ENCODE measurements at regions of chr1 and their contacts with region 1.

Region 1: DNA sequence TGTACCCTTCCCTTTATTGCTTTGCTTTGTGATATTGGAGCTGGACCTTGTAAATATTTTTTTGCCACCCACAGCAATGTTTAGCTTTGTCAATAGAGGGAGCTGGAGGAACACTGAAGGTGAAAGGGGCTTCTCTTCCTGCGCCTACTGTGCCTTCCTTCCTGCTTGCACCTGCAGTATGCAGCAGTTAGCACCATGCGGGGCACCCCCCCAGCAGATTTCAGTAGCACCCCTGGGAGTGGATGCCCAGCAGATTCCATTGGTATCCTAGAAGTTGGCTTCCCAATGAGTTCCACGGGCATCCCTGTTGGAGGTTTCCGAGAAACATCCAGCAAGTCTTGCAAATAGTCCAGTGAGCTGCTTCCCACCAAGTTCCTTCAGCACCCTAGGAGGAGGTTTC is 25.6 kb downstream of the S100A10 start:
- DNase-seq: peak; percentile 76
- ATAC-seq: peak; percentile 78
- H3K4me3 ChIP-seq: no peak overlapping the region
- H3K4me3 Mint-ChIP-seq: no peak overlapping the region
- H3K27ac ChIP-seq: no peak overlapping the region
- H3K27ac Mint-ChIP-seq: no peak overlapping the region
- H3K4me1 ChIP-seq: peaks cover 0 to 7% of the 10 kb centered on the region in 2 donors
- H3K4me1 Mint-ChIP-seq: peaks cover 7% of the 10 kb centered on the region
- H3K27me3 ChIP-seq: peaks cover 0 to 7% (median 4%) of the 10 kb centered on the region in 4 experiments
- H3K27me3 Mint-ChIP-seq: peaks cover 18% of the 10 kb centered on the region
- CTCF ChIP-seq: peak; percentile 79

Region 2: GRCh38 chr1:151472856-151473731 is 495.0 kb before region 1 on chr1:
- CTCF ChIA-PET with region 1: no interaction called
- POLR2A ChIA-PET with region 1: no interaction called
- intact Hi-C with region 1: no loop called
- DNase-seq: peak; percentile 70
- ATAC-seq: peak; percentile 45
- H3K4me3 ChIP-seq: peak overlapping the region in 4 of 5 experiments; percentile 51 to 68 (median 60)
- H3K4me3 Mint-ChIP-seq: peak overlapping the region; percentile 82
- H3K27ac ChIP-seq: peak overlapping the region; percentile 26 to 62
- H3K27ac Mint-ChIP-seq: peak overlapping the region; percentile 86
- H3K4me1 ChIP-seq: peaks cover 0 to 12% of the 10 kb centered on the region in 2 donors
- H3K4me1 Mint-ChIP-seq: peaks cover 7% of the 10 kb centered on the region
- H3K27me3 ChIP-seq: peaks cover 0 to 2% (median 0%) of the 10 kb centered on the region in 4 experiments
- H3K27me3 Mint-ChIP-seq: peaks cover 12% of the 10 kb centered on the region
- CTCF ChIP-seq: no peak

Region 3: GRCh38 chr1:151945725-151946364 is 22.2 kb before region 1 on chr1:
- CTCF ChIA-PET with region 1: interaction called, 13 read pairs
- POLR2A ChIA-PET with region 1: interaction called, 3 read pairs
- intact Hi-C with region 1: no loop called
- DNase-seq: peak; percentile 90
- ATAC-seq: peak; percentile 72
- H3K4me3 ChIP-seq: no peak overlapping the region
- H3K4me3 Mint-ChIP-seq: peak overlapping the region; percentile 71
- H3K27ac ChIP-seq: peak overlapping the region; percentile 84 to 88
- H3K27ac Mint-ChIP-seq: peak overlapping the region; percentile 93
- H3K4me1 ChIP-seq: peaks cover 31 to 38% of the 10 kb centered on the region in 2 donors
- H3K4me1 Mint-ChIP-seq: peaks cover 43% of the 10 kb centered on the region
- H3K27me3 ChIP-seq: no peaks in the 10 kb centered on the region
- H3K27me3 Mint-ChIP-seq: peaks cover 4% of the 10 kb centered on the region
- CTCF ChIP-seq: no peak

Measured in B cell (primary cell).